Endothelial cell of umbilical vein (primary cell): ENCODE measurements at regions of chr14 and their contacts with region 1.

Region 1: GRCh38 chr14:76918751-76919543 is 92.7 kb downstream of the LRRC74A start:
- DNase-seq: peak; percentile 98
- H3K4me3 ChIP-seq: no peak overlapping the region
- H3K27ac ChIP-seq: peak overlapping the region; percentile 86
- H3K4me1 ChIP-seq: peaks cover 32% of the 10 kb centered on the region
- H3K27me3 ChIP-seq: no peaks in the 10 kb centered on the region
- CTCF ChIP-seq: peak in 1 of 2 donors; percentile 24
- POLR2A ChIP-seq: no peak

Region 2: DNA sequence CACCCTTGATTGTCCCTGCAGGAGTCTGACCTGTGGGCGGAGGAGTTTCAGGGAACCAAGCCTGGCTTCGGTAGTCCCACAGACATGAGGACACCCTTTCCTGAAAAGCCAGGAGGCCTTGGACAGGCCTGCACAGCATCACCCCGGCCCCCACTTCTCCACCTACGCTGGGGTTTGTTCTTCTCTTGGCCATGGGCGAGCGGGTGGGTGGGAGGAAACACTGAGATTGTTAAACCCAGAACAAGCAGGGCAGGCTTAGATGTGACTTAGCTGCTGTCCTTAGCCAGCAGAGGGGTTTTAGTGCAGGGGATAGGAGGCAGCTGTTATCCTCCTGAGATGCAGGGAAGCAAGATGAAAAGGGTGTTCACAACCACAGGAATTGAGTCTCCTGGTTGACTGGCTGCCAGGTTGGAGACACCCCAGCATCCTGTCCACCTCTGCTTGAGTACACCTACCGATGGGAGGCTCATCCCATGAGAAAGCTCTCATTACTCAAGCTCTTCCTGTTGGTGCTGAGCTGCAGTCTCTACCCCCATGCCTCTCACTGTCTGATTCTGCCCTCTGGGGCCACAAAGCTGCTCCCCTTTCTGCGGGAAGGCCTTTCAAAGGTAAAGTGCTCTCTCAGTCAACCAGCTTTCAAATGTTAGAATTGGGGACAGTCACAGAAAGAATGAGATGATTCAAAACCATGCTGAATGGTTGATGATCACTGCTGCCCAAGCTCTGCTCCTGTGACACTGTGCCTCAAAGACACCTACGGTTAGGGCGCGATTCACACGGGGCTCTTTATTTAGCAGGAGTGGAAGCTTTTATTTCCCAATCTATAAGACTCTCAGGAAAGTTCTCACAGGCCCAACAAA is 23.2 kb after region 1 on chr14:
- CTCF ChIA-PET with region 1: interaction called, 22 read pairs
- POLR2A ChIA-PET with region 1: interaction called, 3 read pairs
- dilution Hi-C with region 1: no loop called
- intact Hi-C with region 1: loop called (anchors 1 kb)
- DNase-seq: no peak
- H3K4me3 ChIP-seq: no peak overlapping the region
- H3K27ac ChIP-seq: no peak overlapping the region
- H3K4me1 ChIP-seq: peaks cover 8% of the 10 kb centered on the region
- H3K27me3 ChIP-seq: no peaks in the 10 kb centered on the region
- CTCF ChIP-seq: no peak
- POLR2A ChIP-seq: no peak

Region 3: GRCh38 chr14:76956316-76957090 is 37.6 kb after region 1 on chr14:
- CTCF ChIA-PET with region 1: interaction called, 49 read pairs
- POLR2A ChIA-PET with region 1: interaction called, 3 read pairs
- dilution Hi-C with region 1: no loop called
- intact Hi-C with region 1: loop called (anchors 1 kb)
- DNase-seq: peak; percentile 99
- H3K4me3 ChIP-seq: no peak overlapping the region
- H3K27ac ChIP-seq: peak overlapping the region; percentile 95
- H3K4me1 ChIP-seq: peaks cover 73% of the 10 kb centered on the region
- H3K27me3 ChIP-seq: no peaks in the 10 kb centered on the region
- CTCF ChIP-seq: no peak
- POLR2A ChIP-seq: peak; percentile 15

Region 4: DNA sequence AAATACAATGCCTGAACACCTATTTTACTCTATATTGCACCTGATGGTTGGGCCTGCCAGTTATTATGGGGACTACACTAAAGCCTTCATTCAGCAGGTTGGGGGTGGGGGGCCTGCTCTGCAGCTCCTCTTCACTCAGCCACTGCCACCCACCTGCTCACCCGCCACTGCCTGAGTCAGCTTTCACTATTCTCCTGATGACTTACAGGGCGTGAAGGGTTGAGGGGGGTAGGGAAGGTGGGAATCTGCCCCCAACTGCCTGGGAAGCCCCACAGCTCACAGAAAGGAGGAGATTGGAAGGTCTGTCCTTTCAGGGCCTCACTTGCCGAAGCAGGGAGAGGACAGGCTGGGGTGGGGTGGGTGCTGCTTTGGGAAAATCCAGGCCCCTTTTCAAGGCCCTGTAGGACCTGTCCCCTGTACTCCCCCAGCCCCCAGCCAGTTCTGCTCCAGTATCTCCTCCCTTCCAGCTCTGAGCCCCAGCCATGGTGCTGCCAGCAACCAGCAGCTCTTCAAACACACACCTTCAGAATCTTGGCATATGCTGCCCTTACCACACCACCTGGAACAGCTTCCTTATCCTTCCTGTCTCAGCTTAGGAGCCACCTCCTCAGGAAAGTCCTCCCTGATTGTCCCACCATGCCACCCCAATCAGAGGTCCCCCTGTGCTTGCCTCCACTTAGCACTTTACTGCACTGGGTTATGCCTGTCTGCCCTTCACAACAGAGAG is 76.5 kb after region 1 on chr14:
- CTCF ChIA-PET with region 1: interaction called, 8 read pairs
- POLR2A ChIA-PET with region 1: interaction called, 12 read pairs
- dilution Hi-C with region 1: no loop called
- intact Hi-C with region 1: no loop called
- DNase-seq: no peak
- H3K4me3 ChIP-seq: no peak overlapping the region
- H3K27ac ChIP-seq: no peak overlapping the region
- H3K4me1 ChIP-seq: no peaks in the 10 kb centered on the region
- H3K27me3 ChIP-seq: no peaks in the 10 kb centered on the region
- CTCF ChIP-seq: no peak
- POLR2A ChIP-seq: no peak

Region 5: DNA sequence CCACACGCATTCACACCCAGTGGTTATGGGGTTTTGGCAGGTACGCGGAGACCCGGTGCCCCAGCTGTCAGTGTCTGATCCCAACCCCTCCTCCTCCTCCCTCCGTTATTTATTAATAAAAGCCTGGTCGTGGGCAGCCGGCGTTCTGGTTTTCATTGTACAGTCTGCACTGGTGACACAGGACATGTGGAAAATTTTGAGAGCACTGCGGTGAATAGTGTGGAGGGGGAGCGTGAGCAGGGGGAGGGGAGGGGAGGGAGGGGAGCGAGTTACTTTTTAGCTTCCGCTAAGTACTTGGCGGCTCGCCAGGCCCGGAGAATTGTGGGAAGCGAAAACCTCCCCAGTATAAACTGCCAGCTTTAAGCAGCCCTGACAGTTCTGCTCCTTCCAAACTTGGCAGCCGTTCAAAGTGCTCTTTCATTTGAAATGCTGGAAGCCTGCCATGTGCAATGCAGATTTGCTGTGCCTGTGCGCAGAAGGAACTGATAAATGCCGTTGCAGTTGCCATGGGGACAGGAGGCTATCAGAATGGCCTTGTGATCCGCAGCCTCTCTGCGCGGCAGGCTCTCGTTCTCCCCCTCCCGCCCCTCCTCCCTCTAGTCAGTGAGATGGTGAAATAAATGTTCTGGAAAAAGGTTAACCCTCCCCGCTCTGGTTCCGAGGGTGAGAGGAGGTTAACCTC is 121.3 kb after region 1 on chr14:
- CTCF ChIA-PET with region 1: interaction called, 13 read pairs
- POLR2A ChIA-PET with region 1: interaction called, 3 read pairs
- dilution Hi-C with region 1: no loop called
- intact Hi-C with region 1: loop called (anchors 1 kb)
- DNase-seq: peak; percentile 99
- H3K4me3 ChIP-seq: peak overlapping the region in 1 of 3 experiments; percentile 29
- H3K27ac ChIP-seq: peak overlapping the region; percentile 93
- H3K4me1 ChIP-seq: peaks cover 68% of the 10 kb centered on the region
- H3K27me3 ChIP-seq: no peaks in the 10 kb centered on the region
- CTCF ChIP-seq: no peak
- POLR2A ChIP-seq: no peak

Region 6: GRCh38 chr14:77059276-77059915 is 140.4 kb after region 1 on chr14:
- CTCF ChIA-PET with region 1: interaction called, 209 read pairs
- POLR2A ChIA-PET with region 1: no interaction called
- dilution Hi-C with region 1: no loop called
- intact Hi-C with region 1: loop called (anchors 1 kb)
- DNase-seq: peak; percentile 94
- H3K4me3 ChIP-seq: no peak overlapping the region
- H3K27ac ChIP-seq: peak overlapping the region; percentile 41
- H3K4me1 ChIP-seq: peaks cover 23% of the 10 kb centered on the region
- H3K27me3 ChIP-seq: no peaks in the 10 kb centered on the region
- CTCF ChIP-seq: peak; percentile 38 to 57
- POLR2A ChIP-seq: no peak

Region 7: GRCh38 chr14:77097700-77098528 is 179.0 kb after region 1 on chr14 and contains the start of gene CIPC:
- CTCF ChIA-PET with region 1: interaction called, 5 read pairs
- POLR2A ChIA-PET with region 1: no interaction called
- dilution Hi-C with region 1: no loop called
- intact Hi-C with region 1: loop called (anchors 1 kb)
- DNase-seq: peak; percentile 99
- H3K4me3 ChIP-seq: peak within 1 kb of the TSS; percentile 30 to 72 (median 66)
- H3K27ac ChIP-seq: peak within 1 kb of the TSS; percentile 57
- H3K4me1 ChIP-seq: peaks cover 27% of the 10 kb centered on the region
- H3K27me3 ChIP-seq: no peaks in the 10 kb centered on the region
- CTCF ChIP-seq: no peak
- POLR2A ChIP-seq: no peak
- total RNA-seq, gene CIPC: 17.4 and 17.7 TPM in 2 replicates